ENCODE measurements at regions of chr18 and their contacts with region 1.

Region 1: DNA sequence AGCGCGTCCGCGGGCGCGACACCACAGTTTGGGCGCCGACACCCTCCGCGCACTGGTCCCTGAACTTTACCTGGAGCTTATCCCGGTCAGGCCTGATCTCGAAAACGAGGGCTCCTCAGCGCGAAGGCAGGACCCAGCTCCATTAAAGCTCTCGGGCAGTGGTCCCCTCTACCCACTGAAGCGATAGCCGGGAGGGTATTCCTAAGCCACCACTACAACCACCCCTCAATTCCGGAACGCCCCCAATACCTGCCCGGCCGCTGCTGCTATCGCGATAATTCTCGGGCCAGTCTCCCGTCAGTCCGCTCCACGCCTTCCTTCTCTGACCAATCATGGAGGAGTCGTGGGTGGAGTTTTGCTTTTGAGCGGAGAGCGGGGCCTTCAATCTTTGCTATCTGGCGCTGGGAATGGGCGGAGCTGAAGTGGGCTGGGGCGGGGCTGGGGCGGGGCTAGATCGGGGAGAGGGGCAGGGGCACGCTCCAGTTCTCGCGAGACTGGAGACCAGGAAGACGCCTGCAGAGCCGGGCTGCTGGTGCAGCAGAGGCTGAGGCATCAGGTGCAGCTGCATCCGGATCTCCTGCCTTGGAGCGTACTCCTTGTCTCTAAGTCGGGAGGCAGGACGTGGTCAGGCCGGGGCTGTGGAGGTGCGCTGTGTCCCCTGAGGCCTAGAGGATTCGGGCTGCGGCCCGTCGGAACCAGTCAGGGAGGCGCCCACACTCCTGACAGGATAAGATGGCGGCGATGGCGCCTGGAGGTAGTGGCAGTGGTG is at the starts of genes PIGN and RELCH:
- DNase-seq: peak; percentile 99
- H3K4me3 ChIP-seq: peak within 1 kb of the TSS; percentile 84 to 100 (median 98)
- H3K27ac ChIP-seq: peak within 1 kb of the TSS; percentile 77 to 90
- H3K4me1 ChIP-seq: peaks cover 13 to 46% (median 26%) of the 10 kb centered on the region in 4 experiments
- H3K27me3 ChIP-seq: no peaks in the 10 kb centered on the region

Region 2: GRCh38 chr18:62198259-62198658 is 11.3 kb after region 1 on chr18:
- CTCF ChIA-PET with region 1: interaction called, 11 read pairs
- POLR2A ChIA-PET with region 1: interaction called, 3 read pairs
- DNase-seq: no peak
- H3K4me3 ChIP-seq: no peak overlapping the region
- H3K27ac ChIP-seq: no peak overlapping the region
- H3K4me1 ChIP-seq: peaks cover 0 to 3% (median 1%) of the 10 kb centered on the region in 4 experiments
- H3K27me3 ChIP-seq: no peaks in the 10 kb centered on the region

Region 3: GRCh38 chr18:62249478-62250097 is 62.6 kb after region 1 on chr18:
- CTCF ChIA-PET with region 1: interaction called, 132 read pairs
- POLR2A ChIA-PET with region 1: interaction called, 6 read pairs
- DNase-seq: peak; percentile 88 to 92 (median 89)
- H3K4me3 ChIP-seq: no peak overlapping the region
- H3K27ac ChIP-seq: no peak overlapping the region
- H3K4me1 ChIP-seq: no peaks in the 10 kb centered on the region
- H3K27me3 ChIP-seq: no peaks in the 10 kb centered on the region

Region 4: GRCh38 chr18:62347091-62347506 is 160.1 kb after region 1 on chr18:
- CTCF ChIA-PET with region 1: no interaction called
- POLR2A ChIA-PET with region 1: no interaction called
- DNase-seq: peak in 2 of 3 donors; percentile 53 to 61
- H3K4me3 ChIP-seq: peak overlapping the region in 2 of 7 experiments; percentile 29 to 38
- H3K27ac ChIP-seq: no peak overlapping the region
- H3K4me1 ChIP-seq: peaks cover 0 to 16% (median 11%) of the 10 kb centered on the region in 4 experiments
- H3K27me3 ChIP-seq: no peaks in the 10 kb centered on the region